Right cardiac atrium (tissue), 5 donors: ENCODE measurements at regions of chr1 and their contacts with region 1.

Region 1: DNA sequence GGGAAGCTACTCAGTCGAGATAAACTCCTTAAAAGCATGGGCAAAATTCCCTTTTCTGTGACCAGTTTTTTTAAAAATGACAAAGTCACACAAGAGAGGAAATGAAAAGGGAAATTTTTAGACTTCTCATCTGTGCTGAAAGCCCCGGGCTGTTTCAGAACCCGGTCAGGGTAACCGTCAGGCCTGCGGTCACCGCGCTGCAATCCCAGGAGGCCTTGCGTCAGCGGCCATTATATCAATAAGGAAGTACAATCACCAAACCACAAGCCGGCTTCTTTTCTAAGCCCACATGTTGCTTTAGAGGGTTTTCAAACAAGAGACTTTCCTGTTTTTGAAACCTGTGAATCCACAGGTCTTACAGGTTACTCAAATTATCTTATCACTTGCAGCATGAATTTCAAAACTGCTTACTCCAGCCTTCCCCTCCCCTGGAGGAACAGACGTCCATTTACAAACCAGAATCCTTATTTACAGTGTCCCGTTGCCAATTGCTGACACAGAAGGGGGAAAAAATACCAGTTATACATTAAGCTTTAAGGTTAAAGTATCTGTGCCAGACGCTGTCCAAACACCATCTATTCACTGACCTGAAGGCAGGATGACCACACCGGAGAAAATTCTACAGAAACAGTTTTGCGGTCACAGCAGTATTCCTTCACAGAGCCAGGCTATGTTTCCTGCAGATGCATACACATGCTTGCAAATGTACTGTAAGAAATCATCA is 165.3 kb downstream of the TOMM20 start:
- DNase-seq: peak; percentile 85 to 94 (median 93)
- ATAC-seq: peak; percentile 43 to 48
- H3K4me3 ChIP-seq: no peak overlapping the region
- H3K27ac ChIP-seq: peak overlapping the region; percentile 62
- H3K4me1 ChIP-seq: peaks cover 14% of the 10 kb centered on the region
- H3K27me3 ChIP-seq: no peaks in the 10 kb centered on the region

Region 2: DNA sequence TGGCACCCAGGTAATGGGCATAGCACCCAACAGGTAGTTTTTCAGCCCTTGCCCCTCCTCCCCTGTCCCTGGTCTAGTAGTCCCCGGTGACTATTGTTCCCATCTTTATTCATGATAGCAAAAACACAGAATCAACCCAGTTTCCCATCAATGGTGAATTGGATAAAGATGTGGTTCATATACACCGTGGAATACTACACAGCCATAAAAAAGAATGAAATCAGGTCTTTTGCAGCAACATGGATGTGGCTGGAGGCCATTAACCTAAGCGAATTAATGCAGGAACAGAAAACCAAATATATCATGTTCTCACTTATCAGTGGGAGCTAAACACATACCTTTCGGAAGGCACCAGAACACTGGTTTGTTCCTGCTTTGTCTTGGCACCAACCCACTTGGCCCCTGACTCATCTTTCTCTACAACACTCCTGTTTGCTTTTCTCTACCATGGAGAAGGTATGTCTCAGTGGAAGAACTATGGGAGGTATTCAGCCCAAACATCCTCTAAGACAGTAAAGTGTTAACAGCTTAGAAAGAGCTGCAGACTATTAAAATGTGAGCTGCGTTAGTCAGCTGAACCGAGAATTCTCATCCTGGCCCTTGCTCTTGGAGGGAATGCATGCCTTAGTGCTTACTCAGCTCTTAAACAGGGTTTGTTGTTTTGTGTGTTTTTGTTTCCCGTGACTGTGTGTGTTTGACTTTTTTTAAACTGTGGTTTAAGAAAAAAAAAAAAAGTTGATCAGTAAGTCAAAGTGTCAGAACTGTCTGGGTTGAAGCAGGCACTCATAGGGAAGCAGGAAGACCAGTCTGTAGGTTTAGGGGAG is 37.7 kb before region 1 on chr1:
- intact Hi-C with region 1: loop called in 1 of 4 experiments (anchors 5 kb)
- DNase-seq: no peak
- ATAC-seq: peak; percentile 62 to 64
- H3K4me3 ChIP-seq: no peak overlapping the region
- H3K27ac ChIP-seq: peak overlapping the region; percentile 74
- H3K4me1 ChIP-seq: peaks cover 12% of the 10 kb centered on the region
- H3K27me3 ChIP-seq: no peaks in the 10 kb centered on the region